Caco-2 (cell line): ENCODE measurements at regions of chr12 and their contacts with region 1.

Region 1: DNA sequence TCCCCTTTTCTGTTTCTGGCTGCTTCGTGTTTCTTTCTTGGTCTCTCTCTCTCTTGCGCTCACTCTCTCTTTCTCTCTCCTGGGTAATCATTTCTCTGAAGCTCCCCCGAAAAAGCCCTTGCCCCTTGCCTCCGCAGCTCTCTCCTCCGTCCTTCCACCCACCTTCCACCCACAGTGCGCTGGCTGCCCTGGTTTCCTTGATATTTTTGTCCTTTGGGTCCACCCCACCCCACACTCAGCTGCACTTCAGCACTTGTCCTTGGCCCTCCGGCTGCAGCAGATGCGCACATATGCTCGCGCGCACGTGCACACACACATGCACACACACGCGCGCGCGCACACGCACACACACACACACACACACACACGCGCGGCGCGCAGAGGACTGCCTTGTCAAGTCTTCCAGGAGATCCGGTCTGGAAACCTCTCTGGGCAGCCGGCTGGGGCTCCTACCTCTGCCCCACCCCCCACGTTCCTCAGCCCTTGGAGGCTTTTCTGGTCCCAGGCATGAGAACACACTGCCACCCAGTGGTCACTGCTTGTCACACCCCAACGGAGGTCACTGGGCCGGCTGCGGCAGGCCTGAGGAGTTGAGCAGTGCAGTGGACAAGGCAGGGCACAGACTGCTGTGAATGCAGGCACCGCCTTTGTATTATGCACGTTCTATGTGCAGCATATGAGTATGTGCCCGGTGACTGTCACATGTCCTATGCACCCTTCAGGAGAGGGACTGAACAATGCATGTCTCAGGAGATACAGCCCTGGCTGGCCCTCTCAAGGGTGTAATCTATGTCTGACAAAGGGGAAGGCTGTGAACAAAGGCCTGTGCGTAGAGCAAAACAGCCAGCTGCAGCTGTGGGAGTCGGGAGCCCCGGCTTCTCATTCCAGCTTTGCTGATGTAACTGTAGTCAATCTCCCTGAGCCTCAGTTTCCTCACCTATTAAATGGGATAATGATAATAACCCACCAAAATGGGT is 6.5 kb downstream of the LAG3 start:
- DNase-seq: peak; percentile 98 to 99
- H3K4me3 ChIP-seq: peak overlapping the region; percentile 44
- H3K4me3 Mint-ChIP-seq: peak overlapping the region; percentile 81
- H3K27ac Mint-ChIP-seq: peak overlapping the region; percentile 58
- H3K4me1 ChIP-seq: peaks cover 31% of the 10 kb centered on the region
- H3K4me1 Mint-ChIP-seq: peaks cover 43% of the 10 kb centered on the region
- H3K27me3 ChIP-seq: no peaks in the 10 kb centered on the region
- H3K27me3 Mint-ChIP-seq: no peaks in the 10 kb centered on the region
- CTCF ChIP-seq: peak; percentile 99

Region 2: DNA sequence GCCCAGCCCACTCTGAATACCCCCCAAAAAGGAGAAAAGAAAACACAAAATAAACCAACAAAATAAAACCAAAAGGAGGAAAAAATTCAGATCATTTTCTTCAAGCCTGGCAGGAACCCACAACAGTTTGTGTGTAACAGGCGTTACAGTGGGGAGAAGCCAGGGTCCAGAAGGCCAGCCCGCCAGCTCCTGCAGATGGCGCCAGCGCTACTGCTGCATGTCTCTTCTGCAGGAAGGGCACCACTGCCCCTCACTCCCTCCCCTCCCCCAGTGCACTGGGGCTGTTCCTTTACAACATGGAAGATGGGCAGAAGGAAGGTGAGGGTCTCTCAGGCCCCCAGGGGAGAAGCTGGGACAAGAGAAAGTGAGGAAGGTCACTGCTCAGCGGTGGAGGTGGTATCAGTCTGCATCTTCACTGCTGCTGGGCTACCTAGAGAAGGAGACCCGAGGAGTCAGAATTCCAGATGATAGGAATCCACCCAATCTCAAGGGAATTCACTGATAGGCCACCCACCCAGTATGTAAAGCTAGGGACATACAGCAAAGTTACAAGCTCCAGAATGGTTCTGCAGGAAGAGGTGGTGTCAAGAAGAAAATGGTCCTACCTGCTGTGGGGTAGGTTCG is 208.5 kb before region 1 on chr12:
- CTCF ChIA-PET with region 1: no interaction called
- POLR2A ChIA-PET with region 1: no interaction called
- intact Hi-C with region 1: loop called (anchors 5 kb)
- DNase-seq: peak; percentile 82 to 84
- H3K4me3 ChIP-seq: no peak overlapping the region
- H3K4me3 Mint-ChIP-seq: peak overlapping the region; percentile 81
- H3K27ac Mint-ChIP-seq: no peak overlapping the region
- H3K4me1 ChIP-seq: no peaks in the 10 kb centered on the region
- H3K4me1 Mint-ChIP-seq: peaks cover 23% of the 10 kb centered on the region
- H3K27me3 ChIP-seq: no peaks in the 10 kb centered on the region
- H3K27me3 Mint-ChIP-seq: no peaks in the 10 kb centered on the region
- CTCF ChIP-seq: peak; percentile 76 to 82

Region 3: GRCh38 chr12:6662906-6663742 is 115.7 kb before region 1 on chr12 and contains the start of gene ING4:
- CTCF ChIA-PET with region 1: no interaction called
- POLR2A ChIA-PET with region 1: no interaction called
- intact Hi-C with region 1: loop called (anchors 2 kb)
- DNase-seq: peak; percentile 99 to 100
- H3K4me3 ChIP-seq: peak within 1 kb of the TSS; percentile 60
- H3K4me3 Mint-ChIP-seq: peak within 1 kb of the TSS; percentile 79
- H3K27ac Mint-ChIP-seq: peak within 1 kb of the TSS; percentile 83
- H3K4me1 ChIP-seq: peaks cover 12% of the 10 kb centered on the region; the same call in 1 of the 2 replicates
- H3K4me1 Mint-ChIP-seq: peaks cover 14% of the 10 kb centered on the region
- H3K27me3 ChIP-seq: no peaks in the 10 kb centered on the region
- H3K27me3 Mint-ChIP-seq: no peaks in the 10 kb centered on the region
- CTCF ChIP-seq: peak in 1 of 2 experiments; percentile 0
- total RNA-seq, gene ING4: 31.6 and 32.8 TPM in 2 replicates

Region 4: GRCh38 chr12:6723607-6724396 is 55.1 kb before region 1 on chr12 and contains the start of gene COPS7A:
- CTCF ChIA-PET with region 1: interaction called, 4 read pairs
- POLR2A ChIA-PET with region 1: interaction called, 5 read pairs
- intact Hi-C with region 1: loop called (anchors 5 kb)
- DNase-seq: peak; percentile 100
- H3K4me3 ChIP-seq: peak within 1 kb of the TSS; percentile 63
- H3K4me3 Mint-ChIP-seq: peak within 1 kb of the TSS; percentile 73
- H3K27ac Mint-ChIP-seq: peak within 1 kb of the TSS; percentile 80
- H3K4me1 ChIP-seq: peaks cover 11% of the 10 kb centered on the region; the same call in 1 of the 2 replicates
- H3K4me1 Mint-ChIP-seq: peaks cover 11% of the 10 kb centered on the region
- H3K27me3 ChIP-seq: no peaks in the 10 kb centered on the region
- H3K27me3 Mint-ChIP-seq: no peaks in the 10 kb centered on the region
- CTCF ChIP-seq: no peak
- total RNA-seq, gene COPS7A: 56.8 and 61.9 TPM in 2 replicates

Region 5: DNA sequence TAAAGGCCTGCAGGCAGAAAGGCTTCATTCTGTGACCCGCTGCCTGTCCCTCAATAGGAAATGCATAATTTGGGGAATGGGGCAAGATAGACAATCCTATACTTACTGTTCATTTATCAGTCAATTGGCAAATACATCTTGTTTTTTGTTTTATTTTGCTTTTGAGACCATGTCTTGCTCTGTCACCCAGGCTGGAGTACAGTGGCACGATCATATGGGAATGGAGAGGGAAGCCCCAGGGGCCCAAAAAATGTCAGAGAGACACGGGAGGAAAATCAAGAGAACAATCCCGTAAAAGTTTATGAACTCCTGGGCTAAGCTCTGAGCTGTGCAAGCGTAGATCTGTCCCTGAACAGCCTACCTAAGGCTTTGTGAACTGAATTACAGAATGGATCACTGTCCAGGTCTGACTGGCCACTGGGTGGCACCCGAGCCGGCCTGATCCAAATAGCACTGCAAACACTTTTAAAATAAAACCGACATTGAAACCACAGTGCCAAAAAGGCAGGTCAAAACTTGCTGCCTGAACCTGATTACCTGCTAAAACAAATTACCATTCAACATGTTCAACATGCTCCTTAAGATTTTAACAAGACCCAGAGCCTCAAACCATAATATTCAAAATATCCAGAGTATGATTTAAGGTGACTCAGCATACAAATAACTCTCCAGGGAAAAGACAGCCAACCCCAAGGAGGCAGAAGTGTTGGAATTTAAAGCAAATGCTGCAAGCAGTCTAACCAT is 43.2 kb before region 1 on chr12:
- CTCF ChIA-PET with region 1: interaction called, 3 read pairs
- POLR2A ChIA-PET with region 1: no interaction called
- intact Hi-C with region 1: loop called (anchors 1 kb)
- DNase-seq: peak; percentile 70 to 81
- H3K4me3 ChIP-seq: no peak overlapping the region
- H3K4me3 Mint-ChIP-seq: no peak overlapping the region
- H3K27ac Mint-ChIP-seq: peak overlapping the region; percentile 24
- H3K4me1 ChIP-seq: no peaks in the 10 kb centered on the region
- H3K4me1 Mint-ChIP-seq: peaks cover 8% of the 10 kb centered on the region
- H3K27me3 ChIP-seq: no peaks in the 10 kb centered on the region
- H3K27me3 Mint-ChIP-seq: no peaks in the 10 kb centered on the region
- CTCF ChIP-seq: peak; percentile 94

Region 6: DNA sequence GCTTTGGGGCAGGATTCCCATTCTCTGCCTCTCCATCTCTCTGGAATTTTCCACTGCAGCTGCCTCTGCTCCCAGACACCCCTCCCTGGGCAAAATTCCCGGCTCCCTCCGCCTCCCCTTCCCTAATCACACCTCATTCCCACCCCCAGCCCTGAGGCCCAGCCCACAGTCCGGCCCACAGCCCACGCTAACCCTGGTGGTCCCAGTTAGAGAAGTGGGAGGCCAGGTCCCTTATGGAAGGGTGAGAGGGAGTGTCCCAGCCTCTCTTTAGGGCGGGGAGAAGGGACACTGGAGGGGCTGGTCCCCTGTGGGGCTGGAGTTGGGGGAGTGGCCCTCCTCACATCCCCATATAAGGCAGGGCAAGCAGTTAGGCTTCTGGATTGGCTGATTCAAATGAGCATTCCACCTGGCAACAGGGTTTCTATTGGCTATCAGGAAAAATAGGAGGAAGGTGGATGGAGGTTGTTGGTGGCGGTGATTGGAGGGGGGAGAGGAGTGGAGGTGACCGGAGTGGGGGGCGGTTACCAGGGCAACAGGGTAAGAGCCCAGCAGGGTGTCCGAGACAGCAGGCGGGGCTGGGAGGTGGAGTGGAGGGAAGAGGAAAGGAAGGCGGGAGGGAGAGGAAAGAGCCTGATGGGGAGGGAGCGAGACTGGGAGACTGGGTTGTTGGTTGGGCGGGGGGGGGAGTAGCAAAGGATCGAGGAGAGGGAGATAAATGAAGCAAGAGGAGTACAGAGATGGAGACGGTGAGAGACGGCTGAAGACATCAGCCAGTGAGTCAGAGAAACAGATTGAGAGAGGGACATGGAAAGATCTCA is 14.6 kb before region 1 on chr12:
- CTCF ChIA-PET with region 1: interaction called, 19 read pairs
- POLR2A ChIA-PET with region 1: interaction called, 10 read pairs
- intact Hi-C with region 1: loop called (anchors 1 kb)
- DNase-seq: peak; percentile 89 to 95
- H3K4me3 ChIP-seq: peak overlapping the region; percentile 10; the same call in 1 of the 2 replicates
- H3K4me3 Mint-ChIP-seq: peak overlapping the region; percentile 71
- H3K27ac Mint-ChIP-seq: peak overlapping the region; percentile 79
- H3K4me1 ChIP-seq: peaks cover 54% of the 10 kb centered on the region
- H3K4me1 Mint-ChIP-seq: peaks cover 53% of the 10 kb centered on the region
- H3K27me3 ChIP-seq: no peaks in the 10 kb centered on the region
- H3K27me3 Mint-ChIP-seq: no peaks in the 10 kb centered on the region
- CTCF ChIP-seq: no peak

Region 7: DNA sequence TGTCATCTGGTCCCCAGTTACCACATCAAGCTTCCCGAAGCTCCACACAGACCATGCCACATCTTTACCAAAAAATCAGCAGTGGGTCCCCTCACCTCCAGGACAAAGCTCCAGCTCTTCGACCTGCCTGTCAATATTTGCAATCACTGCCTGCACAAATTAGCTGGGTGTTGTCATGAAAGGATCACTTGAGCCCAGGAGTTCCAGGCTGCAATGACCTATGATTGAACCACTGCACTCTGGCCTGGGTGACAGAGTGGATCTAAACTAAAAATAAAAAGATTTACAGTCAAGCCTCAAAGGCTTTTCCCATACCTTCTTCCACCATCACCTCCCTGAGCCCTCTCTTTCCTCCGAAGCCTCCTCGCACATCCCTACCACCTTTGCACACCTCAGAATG is 17.7 kb after region 1 on chr12:
- CTCF ChIA-PET with region 1: no interaction called
- POLR2A ChIA-PET with region 1: no interaction called
- intact Hi-C with region 1: no loop called
- DNase-seq: no peak
- H3K4me3 ChIP-seq: no peak overlapping the region
- H3K4me3 Mint-ChIP-seq: no peak overlapping the region
- H3K27ac Mint-ChIP-seq: no peak overlapping the region
- H3K4me1 ChIP-seq: no peaks in the 10 kb centered on the region
- H3K4me1 Mint-ChIP-seq: peaks cover 21% of the 10 kb centered on the region
- H3K27me3 ChIP-seq: no peaks in the 10 kb centered on the region
- H3K27me3 Mint-ChIP-seq: no peaks in the 10 kb centered on the region
- CTCF ChIP-seq: no peak

Region 8: GRCh38 chr12:6825398-6826124 is 46.7 kb after region 1 on chr12:
- CTCF ChIA-PET with region 1: interaction called, 7 read pairs
- POLR2A ChIA-PET with region 1: no interaction called
- intact Hi-C with region 1: loop called (anchors 1 kb)
- DNase-seq: peak; percentile 87 to 93
- H3K4me3 ChIP-seq: no peak overlapping the region
- H3K4me3 Mint-ChIP-seq: no peak overlapping the region
- H3K27ac Mint-ChIP-seq: no peak overlapping the region
- H3K4me1 ChIP-seq: peaks cover 23% of the 10 kb centered on the region
- H3K4me1 Mint-ChIP-seq: peaks cover 14% of the 10 kb centered on the region
- H3K27me3 ChIP-seq: no peaks in the 10 kb centered on the region; the same call in 1 of the 2 replicates
- H3K27me3 Mint-ChIP-seq: peaks cover 26% of the 10 kb centered on the region
- CTCF ChIP-seq: peak; percentile 97 to 98